Prostate gland (tissue), 2 donors: ENCODE measurements at regions of chr9 and their contacts with region 1.

Region 1: DNA sequence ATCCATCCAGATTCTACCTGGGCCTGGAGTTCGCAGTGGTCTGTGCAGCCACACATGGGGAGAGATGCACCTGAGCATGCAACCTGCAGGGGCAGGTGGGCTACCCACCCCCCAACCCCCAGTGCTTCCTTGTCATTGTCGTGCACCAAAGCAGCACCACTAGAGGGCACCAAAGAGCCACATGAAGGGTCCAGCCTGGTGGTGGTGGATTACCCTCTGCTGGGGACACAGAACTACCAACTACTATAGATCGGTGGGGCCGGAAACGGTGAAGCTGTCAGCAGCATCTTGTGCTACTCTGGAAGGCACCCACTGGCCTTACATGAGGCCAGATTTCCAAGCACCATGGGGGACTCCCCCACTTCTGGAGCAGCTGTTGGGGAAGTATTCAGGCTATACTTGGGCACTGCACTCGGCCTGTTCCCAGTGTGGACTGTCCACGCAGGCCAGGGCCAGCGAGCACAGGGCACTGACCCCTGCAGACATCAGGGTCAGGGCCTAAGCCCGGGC is 60.2 kb upstream of the TBC1D2 start:
- DNase-seq: peak; percentile 57
- H3K4me3 ChIP-seq: no peak overlapping the region
- H3K27ac ChIP-seq: no peak overlapping the region
- H3K4me1 ChIP-seq: no peaks in the 10 kb centered on the region
- H3K27me3 ChIP-seq: no peaks in the 10 kb centered on the region
- CTCF ChIP-seq: peak; percentile 64 to 91 (median 84)
- POLR2A ChIP-seq: no peak

Region 2: DNA sequence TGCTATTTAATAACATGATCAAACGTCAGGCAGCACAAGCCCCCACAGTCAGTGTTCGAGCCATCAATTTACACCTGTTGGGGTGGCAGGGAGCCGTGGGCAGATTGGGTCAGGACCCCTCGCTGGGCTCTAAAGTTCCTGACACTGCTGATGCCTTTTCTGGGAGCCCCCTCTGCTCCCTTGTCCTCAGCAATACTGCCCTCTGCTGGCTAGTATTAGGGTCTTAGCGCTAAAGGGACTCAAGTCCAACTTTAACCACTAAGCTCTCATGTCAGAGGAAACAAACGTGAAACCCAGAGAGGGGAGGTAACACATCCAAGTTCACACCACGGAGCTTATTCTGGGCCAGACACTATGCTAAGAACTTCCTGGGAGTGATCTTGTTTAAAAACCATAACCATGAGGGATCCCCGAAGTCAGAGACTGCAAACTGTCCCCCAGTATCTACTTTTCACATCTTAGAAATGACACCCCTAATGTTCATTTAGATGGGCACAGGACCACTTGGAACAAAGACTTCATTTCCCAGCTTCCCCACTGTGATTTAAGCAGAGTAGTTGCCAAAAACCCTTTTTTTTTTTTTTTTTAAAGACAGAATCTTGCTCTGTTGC is 460.3 kb after region 1 on chr9:
- intact Hi-C with region 1: loop called (anchors 2 kb)
- DNase-seq: no peak
- H3K4me3 ChIP-seq: no peak overlapping the region
- H3K27ac ChIP-seq: no peak overlapping the region
- H3K4me1 ChIP-seq: no peaks in the 10 kb centered on the region
- H3K27me3 ChIP-seq: no peaks in the 10 kb centered on the region
- CTCF ChIP-seq: peak; percentile 37 to 61 (median 40)
- POLR2A ChIP-seq: no peak